ENCODE measurements at regions of chr12 and their contacts with region 1.

Region 1: GRCh38 chr12:43882578-43883178 is 46.8 kb downstream of the TMEM117 start:
- DNase-seq: peak; percentile 62 to 86 (median 80)
- H3K4me3 ChIP-seq: no peak overlapping the region
- H3K27ac ChIP-seq: no peak overlapping the region
- H3K4me1 ChIP-seq: no peaks in the 10 kb centered on the region
- H3K27me3 ChIP-seq: no peaks in the 10 kb centered on the region

Region 2: GRCh38 chr12:43444940-43445564 is 437.6 kb before region 1 on chr12:
- CTCF ChIA-PET with region 1: interaction called, 37 read pairs
- POLR2A ChIA-PET with region 1: no interaction called
- DNase-seq: peak; percentile 58 to 78 (median 70)
- H3K4me3 ChIP-seq: no peak overlapping the region
- H3K27ac ChIP-seq: no peak overlapping the region
- H3K4me1 ChIP-seq: no peaks in the 10 kb centered on the region
- H3K27me3 ChIP-seq: no peaks in the 10 kb centered on the region

Region 3: GRCh38 chr12:43776498-43776897 is 106.2 kb before region 1 on chr12:
- CTCF ChIA-PET with region 1: interaction called, 43 read pairs
- POLR2A ChIA-PET with region 1: no interaction called
- DNase-seq: peak; percentile 27 to 66 (median 60)
- H3K4me3 ChIP-seq: no peak overlapping the region
- H3K27ac ChIP-seq: no peak overlapping the region
- H3K4me1 ChIP-seq: no peaks in the 10 kb centered on the region
- H3K27me3 ChIP-seq: no peaks in the 10 kb centered on the region

Region 4: DNA sequence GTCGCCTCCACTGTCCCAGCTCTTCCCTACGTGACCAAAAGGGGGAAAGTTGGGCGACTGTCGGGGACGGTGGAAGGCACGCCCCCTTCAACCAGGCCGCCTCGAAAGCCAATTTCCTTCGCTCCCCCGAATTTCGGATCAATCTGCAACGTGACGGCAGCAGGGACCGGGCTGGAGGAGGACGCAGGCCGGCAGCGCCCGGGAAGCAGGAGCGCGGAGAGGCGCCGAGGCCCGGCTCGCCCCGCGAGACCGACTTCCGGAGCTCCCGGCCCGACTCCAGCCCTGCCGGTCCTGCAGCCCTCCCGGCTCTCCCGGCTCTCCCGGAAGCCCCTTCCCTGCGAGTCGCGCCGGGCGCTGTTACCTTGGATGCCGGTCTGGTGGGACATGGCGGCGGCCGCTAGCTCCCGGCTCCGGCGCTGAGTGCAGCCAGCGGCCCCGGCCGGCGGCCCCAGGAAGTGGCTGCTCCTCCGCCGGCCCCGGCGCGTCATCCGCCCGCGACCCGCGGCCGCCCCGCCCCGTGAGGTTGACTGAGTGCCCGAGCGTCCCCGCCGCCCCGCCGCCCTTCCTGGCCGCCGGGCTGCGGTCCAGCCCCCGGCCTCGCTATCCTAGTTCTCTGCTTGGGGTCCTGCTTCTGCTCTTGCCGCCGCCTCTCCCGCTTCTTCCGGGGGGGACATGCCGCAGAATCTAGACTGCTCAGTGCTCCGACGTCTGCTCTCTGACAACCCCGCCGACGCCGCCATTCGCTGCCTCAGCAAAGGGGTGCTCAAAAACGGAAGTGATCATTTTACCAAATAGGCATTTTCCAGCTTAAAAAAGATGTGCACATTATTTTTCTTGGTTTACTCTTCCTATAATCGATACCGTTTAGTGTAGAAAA is 76.6 kb before region 1 on chr12 and contains the start of gene TWF1:
- CTCF ChIA-PET with region 1: interaction called, 21 read pairs
- POLR2A ChIA-PET with region 1: no interaction called
- DNase-seq: peak; percentile 80 to 91 (median 84)
- H3K4me3 ChIP-seq: peak within 1 kb of the TSS; percentile 79 to 99 (median 97)
- H3K27ac ChIP-seq: peak within 1 kb of the TSS; percentile 92 to 97
- H3K4me1 ChIP-seq: peaks cover 8 to 21% (median 19%) of the 10 kb centered on the region in 4 experiments
- H3K27me3 ChIP-seq: no peaks in the 10 kb centered on the region

Measured in common myeloid progenitor, CD34-positive (primary cell).